Head of caudate nucleus (tissue), 42 donors: ENCODE measurements at regions of chr4 and their contacts with region 1.

Region 1: GRCh38 chr4:147586637-147587036 is 30.6 kb upstream of the TMEM184C start:
- DNase-seq: no peak

Region 2: DNA sequence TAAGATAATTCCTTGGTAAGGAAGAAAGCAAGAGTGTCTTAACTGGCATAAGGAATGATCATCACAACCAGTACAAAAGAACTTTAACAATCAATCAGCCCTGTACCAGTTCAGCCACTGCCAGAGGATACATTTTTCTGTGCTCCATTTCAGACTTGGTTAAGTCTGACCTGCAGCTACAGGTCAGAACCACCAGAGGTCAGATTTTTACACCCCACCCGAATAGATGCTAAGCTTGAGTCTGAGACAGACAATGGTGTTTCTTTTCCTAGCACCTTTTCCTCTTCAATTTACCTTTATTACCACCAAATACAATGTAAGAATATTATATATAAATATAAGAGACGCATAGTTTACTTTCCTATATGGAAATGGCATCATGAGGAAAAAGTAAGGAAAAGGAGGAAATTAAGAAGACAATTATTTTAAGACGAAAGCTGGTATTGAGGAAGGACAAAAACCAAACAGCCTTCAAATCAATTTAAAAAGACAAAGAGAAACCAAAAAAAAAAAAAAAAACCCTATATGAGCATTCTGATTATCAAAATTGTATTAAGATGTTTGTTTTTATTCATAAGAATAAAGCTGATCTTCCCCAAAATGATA is 425.6 kb before region 1 on chr4:
- intact Hi-C with region 1: loop called (anchors 5 kb)
- DNase-seq: peak in 25 of 42 donors; percentile 11 to 65 (median 33)

Region 3: GRCh38 chr4:147518846-147519767 is 67.5 kb before region 1 on chr4:
- intact Hi-C with region 1: loop called (anchors 5 kb)
- DNase-seq: peak; percentile 11 to 87 (median 69)

Region 4: DNA sequence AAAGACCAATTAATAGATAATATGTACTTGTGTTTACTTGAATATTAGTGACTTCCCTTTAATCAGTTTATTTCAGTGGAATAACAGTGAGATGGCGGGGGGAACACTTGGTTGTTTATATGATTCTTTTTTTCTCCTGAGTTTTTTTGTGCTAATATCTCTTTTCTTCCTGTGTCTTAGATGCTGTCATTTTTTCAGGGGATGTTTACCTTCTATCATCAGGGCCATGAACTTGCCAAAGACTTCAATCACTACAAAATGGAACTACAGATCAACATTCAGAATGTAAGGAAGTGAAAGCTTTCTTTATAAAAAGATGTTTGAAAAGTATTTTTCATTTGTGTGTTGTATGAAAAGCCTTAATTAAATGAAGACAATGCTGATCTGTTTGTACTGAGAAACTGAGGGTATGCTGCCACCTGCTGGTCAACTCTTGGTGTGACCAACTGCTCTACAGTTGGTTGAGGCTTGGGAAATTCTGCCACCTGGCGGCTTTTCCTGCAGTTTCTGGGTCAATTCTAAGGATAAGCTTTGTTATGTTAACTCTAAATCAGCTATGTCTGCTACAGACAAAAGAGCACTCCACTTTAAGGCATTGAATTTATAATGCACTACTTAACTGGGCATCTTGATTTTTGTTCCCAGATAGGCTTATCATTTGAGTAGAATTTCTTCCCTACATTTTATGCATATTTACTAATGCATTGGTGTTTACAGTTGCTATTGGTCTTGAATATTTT is 280.1 kb after region 1 on chr4:
- intact Hi-C with region 1: no loop called
- DNase-seq: peak; percentile 84 to 98 (median 95)